A549 (cell line): ENCODE measurements at regions of chr15 and their contacts with region 1.

Region 1: DNA sequence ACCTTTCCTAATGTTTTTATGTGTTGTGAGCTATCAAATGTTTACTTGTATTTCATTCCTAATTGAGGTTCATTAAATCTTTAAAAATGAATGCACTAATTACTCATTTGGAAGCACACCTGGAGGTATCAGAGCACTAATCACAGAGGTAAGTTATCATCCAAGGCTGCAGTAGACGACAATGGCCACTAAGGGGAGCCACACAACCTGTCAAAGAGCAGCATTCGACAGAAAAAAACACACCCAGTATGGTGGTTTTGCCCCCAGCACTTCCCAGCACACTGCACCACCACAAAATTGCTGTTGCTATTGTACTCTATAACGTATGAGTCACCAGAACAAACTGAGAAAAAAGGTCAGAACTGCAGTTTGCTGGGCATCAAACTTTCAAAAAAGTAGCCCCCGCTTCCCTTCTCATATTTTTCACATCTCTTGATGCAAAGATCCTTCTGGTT is 205.9 kb upstream of the IGF1R start:
- DNase-seq: peak; percentile 80 to 86
- ATAC-seq: peak; percentile 57 to 86
- H3K4me3 ChIP-seq: no peak overlapping the region
- H3K27ac ChIP-seq: no peak overlapping the region
- H3K4me1 ChIP-seq: peaks cover 8% of the 10 kb centered on the region
- CTCF ChIP-seq: peak; percentile 97
- EP300 ChIP-seq: no peak
- POLR2A ChIP-seq: no peak
- RAD21 ChIP-seq: peak; percentile 97 to 98

Region 2: GRCh38 chr15:98177924-98178592 is 264.3 kb before region 1 on chr15:
- CTCF ChIA-PET with region 1: no interaction called
- POLR2A ChIA-PET with region 1: no interaction called
- DNase-seq: peak; percentile 48 to 70
- ATAC-seq: peak; percentile 96 to 97
- H3K4me3 ChIP-seq: no peak overlapping the region
- H3K27ac ChIP-seq: no peak overlapping the region
- H3K4me1 ChIP-seq: no peaks in the 10 kb centered on the region
- CTCF ChIP-seq: peak; percentile 61
- EP300 ChIP-seq: no peak
- POLR2A ChIP-seq: no peak
- RAD21 ChIP-seq: peak; percentile 71 to 88

Region 3: DNA sequence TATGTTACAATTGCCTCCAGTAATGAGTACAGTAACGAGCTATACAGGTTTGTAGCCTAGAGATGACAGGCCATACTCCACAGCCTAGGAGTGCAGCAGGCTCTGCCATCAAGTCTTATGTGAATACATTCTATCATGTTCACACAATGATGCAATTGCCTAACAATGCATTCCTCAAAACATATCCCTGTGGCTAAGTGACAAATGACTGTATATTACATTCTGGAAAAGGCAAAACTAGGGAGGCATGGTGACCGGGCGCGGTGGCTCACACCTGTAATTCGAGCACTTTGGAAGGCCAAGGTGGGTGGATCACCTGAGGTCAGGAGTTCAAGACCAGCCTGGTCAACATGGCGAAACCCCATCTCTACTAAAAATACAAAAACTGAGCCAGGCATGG is 13.6 kb after region 1 on chr15:
- CTCF ChIA-PET with region 1: interaction called, 32 read pairs
- POLR2A ChIA-PET with region 1: no interaction called
- DNase-seq: no peak
- ATAC-seq: no peak
- H3K4me3 ChIP-seq: no peak overlapping the region
- H3K27ac ChIP-seq: no peak overlapping the region
- H3K4me1 ChIP-seq: no peaks in the 10 kb centered on the region
- CTCF ChIP-seq: no peak
- EP300 ChIP-seq: no peak
- POLR2A ChIP-seq: no peak
- RAD21 ChIP-seq: no peak